CD8-positive, alpha-beta memory T cell (primary cell): ENCODE measurements at regions of chr5 and their contacts with region 1.

Region 1: GRCh38 chr5:141564216-141564692 is 54.5 kb downstream of the DIAPH1 start:
- DNase-seq: peak; percentile 45 to 84 (median 72)
- H3K4me3 ChIP-seq: no peak overlapping the region
- H3K4me3 Mint-ChIP-seq: peak overlapping the region in 1 of 7 donors; percentile 5
- H3K27ac ChIP-seq: no peak overlapping the region
- H3K27ac Mint-ChIP-seq: peak overlapping the region; percentile 43 to 95 (median 82)
- H3K4me1 ChIP-seq: peaks cover 4% of the 10 kb centered on the region
- H3K4me1 Mint-ChIP-seq: peaks cover 33 to 58% (median 38%) of the 10 kb centered on the region in 3 donors
- H3K27me3 ChIP-seq: no peaks in the 10 kb centered on the region
- H3K27me3 Mint-ChIP-seq: no peaks in the 10 kb centered on the region

Region 2: GRCh38 chr5:141234109-141234667 is 330.1 kb before region 1 on chr5:
- CTCF ChIA-PET with region 1: no interaction called
- POLR2A ChIA-PET with region 1: no interaction called
- DNase-seq: no peak
- H3K4me3 ChIP-seq: no peak overlapping the region
- H3K4me3 Mint-ChIP-seq: no peak overlapping the region
- H3K27ac ChIP-seq: no peak overlapping the region
- H3K27ac Mint-ChIP-seq: no peak overlapping the region
- H3K4me1 ChIP-seq: no peaks in the 10 kb centered on the region
- H3K4me1 Mint-ChIP-seq: no peaks in the 10 kb centered on the region
- H3K27me3 ChIP-seq: peaks cover 6% of the 10 kb centered on the region
- H3K27me3 Mint-ChIP-seq: peaks cover 25 to 40% of the 10 kb centered on the region in 2 donors

Region 3: DNA sequence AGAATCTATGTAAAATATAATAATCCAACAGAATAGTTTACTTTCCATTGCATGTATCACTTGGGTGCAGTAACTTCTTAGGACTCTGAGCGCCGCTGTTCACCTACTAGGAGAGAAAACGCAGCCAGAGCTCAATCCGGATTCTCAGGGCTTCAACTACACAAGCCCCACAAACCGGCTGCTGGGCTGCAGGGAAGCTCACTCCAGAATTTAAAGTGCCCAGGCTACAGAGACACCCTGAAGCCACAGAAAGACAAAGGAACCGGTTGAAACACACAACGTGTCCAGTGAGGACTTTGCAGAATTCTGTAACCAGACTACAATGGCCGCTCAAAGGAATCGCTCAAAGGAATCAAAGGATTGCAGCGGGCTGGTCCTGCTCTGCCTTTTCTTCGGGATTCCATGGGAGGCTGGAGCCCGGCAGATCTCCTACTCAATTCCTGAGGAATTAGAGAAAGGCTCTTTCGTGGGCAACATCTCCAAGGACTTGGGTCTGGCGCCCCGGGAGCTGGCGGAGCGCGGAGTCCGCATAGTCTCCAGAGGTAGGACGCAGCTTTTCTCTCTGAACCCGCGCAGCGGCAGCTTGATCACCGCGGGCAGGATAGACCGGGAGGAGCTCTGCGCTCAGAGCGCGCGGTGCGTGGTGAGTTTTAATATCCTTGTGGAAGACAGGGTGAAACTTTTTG is 151.3 kb before region 1 on chr5 and contains the start of gene PCDHGA10:
- CTCF ChIA-PET with region 1: interaction called, 10 read pairs
- POLR2A ChIA-PET with region 1: no interaction called
- DNase-seq: peak; percentile 33 to 61 (median 41)
- H3K4me3 ChIP-seq: peak within 1 kb of the TSS; percentile 77
- H3K4me3 Mint-ChIP-seq: peak within 1 kb of the TSS; percentile 77 to 95 (median 84)
- H3K27ac ChIP-seq: no peak within 1 kb of the TSS
- H3K27ac Mint-ChIP-seq: peak within 1 kb of the TSS in 2 of 8 donors; percentile 10 to 38
- H3K4me1 ChIP-seq: peaks cover 7% of the 10 kb centered on the region
- H3K4me1 Mint-ChIP-seq: peaks cover 20 to 29% (median 21%) of the 10 kb centered on the region in 3 donors
- H3K27me3 ChIP-seq: peaks cover 59% of the 10 kb centered on the region
- H3K27me3 Mint-ChIP-seq: peaks cover 63 to 77% of the 10 kb centered on the region in 2 donors
- total RNA-seq, gene PCDHGA10: 0.16 to 0.20 TPM

Region 4: DNA sequence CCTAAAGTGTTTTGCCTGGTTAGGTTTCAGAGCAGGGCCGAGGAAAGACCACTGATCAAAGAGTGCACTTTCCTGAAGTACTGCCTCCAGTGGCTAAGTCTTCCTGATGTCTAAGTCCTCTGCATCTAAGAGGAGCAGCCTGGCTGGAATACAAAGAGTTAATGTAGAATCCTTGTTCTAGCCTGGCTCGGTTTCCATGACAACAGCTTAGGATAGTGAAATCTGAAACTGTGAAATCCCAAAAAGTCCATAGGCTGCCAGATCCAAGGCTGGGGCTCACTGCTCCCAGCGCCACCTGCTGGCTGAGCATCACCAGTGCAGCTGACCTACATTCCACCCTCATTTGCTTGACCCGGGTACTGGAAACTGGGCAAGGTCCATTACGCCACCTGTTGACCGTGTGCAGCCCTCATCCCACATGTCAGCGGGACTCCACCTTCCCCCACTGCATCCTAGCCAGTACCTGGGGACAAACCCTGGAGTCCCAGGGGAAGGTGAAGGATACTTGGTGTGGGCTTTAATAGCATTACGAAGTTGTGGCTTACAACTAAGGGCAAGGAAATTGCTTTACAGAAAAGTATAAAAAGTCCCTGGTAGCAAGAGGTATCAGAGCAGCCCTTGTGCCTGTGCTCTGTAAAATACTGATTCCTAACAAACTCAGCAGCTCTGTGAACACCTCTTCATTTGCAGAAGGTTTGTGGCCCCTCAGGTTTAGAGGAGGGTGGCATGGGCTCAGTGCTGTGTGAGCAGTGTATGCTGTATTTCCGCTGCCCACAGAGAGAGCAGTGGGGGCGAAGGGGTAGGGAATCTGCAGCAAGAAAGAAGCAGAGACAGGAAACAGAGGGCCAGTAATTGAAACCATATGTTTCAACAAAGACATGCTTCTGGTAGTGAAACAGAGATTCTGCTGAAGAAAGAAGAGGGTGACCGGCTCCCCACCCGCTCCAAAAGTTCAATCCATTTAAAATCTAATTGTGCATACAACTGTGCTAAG is 39.4 kb before region 1 on chr5:
- CTCF ChIA-PET with region 1: interaction called, 14 read pairs
- POLR2A ChIA-PET with region 1: no interaction called
- DNase-seq: peak; percentile 40 to 58 (median 46)
- H3K4me3 ChIP-seq: no peak overlapping the region
- H3K4me3 Mint-ChIP-seq: peak overlapping the region in 1 of 7 donors; percentile 57
- H3K27ac ChIP-seq: no peak overlapping the region
- H3K27ac Mint-ChIP-seq: peak overlapping the region in 7 of 8 donors; percentile 61 to 86 (median 72)
- H3K4me1 ChIP-seq: no peaks in the 10 kb centered on the region
- H3K4me1 Mint-ChIP-seq: peaks cover 10 to 21% (median 13%) of the 10 kb centered on the region in 3 donors
- H3K27me3 ChIP-seq: no peaks in the 10 kb centered on the region
- H3K27me3 Mint-ChIP-seq: peaks cover 0 to 3% of the 10 kb centered on the region in 2 donors

Region 5: DNA sequence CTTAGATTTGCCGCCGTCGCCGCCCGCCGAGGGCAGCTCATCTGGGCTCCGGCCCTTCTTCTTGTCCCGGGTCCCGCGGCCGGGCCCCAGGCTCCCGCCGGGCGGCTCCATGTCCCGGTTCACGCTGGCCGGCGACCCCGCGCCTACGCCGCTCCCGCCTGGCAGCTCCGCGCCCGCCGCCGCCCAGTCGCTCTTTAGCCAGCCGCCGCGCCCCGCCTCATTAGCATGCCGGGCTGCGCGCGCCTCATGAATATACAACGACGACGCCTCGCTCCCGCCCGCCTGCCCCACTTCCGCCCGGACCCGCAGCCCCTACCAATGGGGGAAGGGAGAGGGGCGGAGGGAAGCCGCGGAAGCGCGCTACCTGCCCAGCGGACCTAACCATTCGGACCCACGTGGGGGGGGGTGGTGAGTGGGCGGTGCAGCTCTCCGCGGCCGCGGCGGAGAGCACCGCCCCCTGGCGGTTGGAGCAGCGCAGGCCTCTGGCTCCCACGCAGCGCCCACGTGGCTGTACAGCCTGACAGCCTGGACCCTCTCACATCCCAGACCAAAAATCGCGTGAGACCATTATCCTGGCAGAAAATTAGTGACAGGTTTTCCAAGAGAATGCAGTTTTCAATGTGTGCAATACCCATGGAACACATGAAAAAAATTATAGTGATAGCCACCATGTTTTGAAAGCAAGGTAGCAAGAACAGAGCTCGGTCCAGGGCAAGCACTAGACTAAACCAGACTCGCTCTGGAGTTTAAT is 54.7 kb after region 1 on chr5 and contains the start of gene DIAPH1:
- CTCF ChIA-PET with region 1: interaction called, 23 read pairs
- POLR2A ChIA-PET with region 1: no interaction called
- DNase-seq: peak; percentile 96 to 99 (median 97)
- H3K4me3 ChIP-seq: peak within 1 kb of the TSS; percentile 98
- H3K4me3 Mint-ChIP-seq: peak within 1 kb of the TSS; percentile 95 to 100 (median 97)
- H3K27ac ChIP-seq: peak within 1 kb of the TSS; percentile 82
- H3K27ac Mint-ChIP-seq: peak within 1 kb of the TSS; percentile 91 to 99 (median 94)
- H3K4me1 ChIP-seq: peaks cover 38% of the 10 kb centered on the region
- H3K4me1 Mint-ChIP-seq: peaks cover 37 to 46% (median 41%) of the 10 kb centered on the region in 3 donors
- H3K27me3 ChIP-seq: no peaks in the 10 kb centered on the region
- H3K27me3 Mint-ChIP-seq: no peaks in the 10 kb centered on the region
- total RNA-seq, gene DIAPH1: 212 to 217 TPM